MCF 10A (cell line): ENCODE measurements at regions of chr5 and their contacts with region 1.

Region 1: DNA sequence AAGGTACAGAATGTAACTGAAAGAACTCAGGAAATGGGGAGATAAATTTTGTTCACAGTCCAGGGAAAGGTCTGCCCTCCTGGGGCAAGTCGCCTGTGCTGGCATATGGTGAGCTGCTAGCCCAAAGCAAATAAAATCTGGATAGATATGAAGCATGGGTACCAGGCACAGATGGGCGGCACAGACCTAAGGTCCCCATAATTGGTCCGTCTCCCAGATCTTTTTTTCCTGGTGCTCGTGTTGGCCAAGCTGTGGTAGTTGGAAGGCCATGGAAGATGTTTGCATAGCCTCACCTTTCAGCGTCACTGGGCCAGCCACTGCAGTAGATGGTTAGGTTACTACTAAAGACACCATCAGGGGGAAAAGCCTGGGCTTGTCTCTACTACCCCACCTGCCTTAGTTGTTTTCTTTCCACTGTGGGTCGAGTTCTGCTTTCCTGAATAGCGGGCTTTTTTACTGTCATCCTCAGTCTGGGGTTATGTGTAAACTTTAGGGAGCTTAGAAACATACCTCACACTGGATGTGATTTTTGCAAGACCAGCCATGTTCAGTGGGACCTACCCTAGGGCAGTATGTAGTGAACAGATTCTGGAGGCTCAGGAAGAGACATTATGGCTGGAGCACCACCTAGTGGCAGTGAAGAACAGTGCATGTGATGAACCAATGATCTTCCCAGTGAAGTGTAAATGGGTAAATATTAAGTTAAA is 24.2 kb upstream of the GLRX start:
- DNase-seq: peak; percentile 84
- H3K4me3 Mint-ChIP-seq: no peak overlapping the region
- H3K27ac Mint-ChIP-seq: no peak overlapping the region
- H3K4me1 Mint-ChIP-seq: peaks cover 32% of the 10 kb centered on the region
- H3K27me3 Mint-ChIP-seq: no peaks in the 10 kb centered on the region
- CTCF ChIP-seq: peak; percentile 91

Region 2: GRCh38 chr5:95352691-95353090 is 494.0 kb before region 1 on chr5:
- CTCF ChIA-PET with region 1: no interaction called
- POLR2A ChIA-PET with region 1: no interaction called
- intact Hi-C with region 1: no loop called
- DNase-seq: no peak
- H3K4me3 Mint-ChIP-seq: no peak overlapping the region
- H3K27ac Mint-ChIP-seq: no peak overlapping the region
- H3K4me1 Mint-ChIP-seq: no peaks in the 10 kb centered on the region
- H3K27me3 Mint-ChIP-seq: no peaks in the 10 kb centered on the region
- CTCF ChIP-seq: no peak

Region 3: GRCh38 chr5:95646554-95647431 is 199.9 kb before region 1 on chr5 and contains the start of gene RFESD:
- CTCF ChIA-PET with region 1: interaction called, 149 read pairs
- POLR2A ChIA-PET with region 1: interaction called, 10 read pairs
- intact Hi-C with region 1: loop called (anchors 1 kb)
- DNase-seq: peak; percentile 96
- H3K4me3 Mint-ChIP-seq: peak within 1 kb of the TSS; percentile 74
- H3K27ac Mint-ChIP-seq: peak within 1 kb of the TSS; percentile 89
- H3K4me1 Mint-ChIP-seq: peaks cover 15% of the 10 kb centered on the region
- H3K27me3 Mint-ChIP-seq: no peaks in the 10 kb centered on the region
- CTCF ChIP-seq: no peak
- total RNA-seq, gene RFESD: 4.2 and 5.9 TPM in 2 replicates

Region 4: GRCh38 chr5:95669540-95669939 is 177.2 kb before region 1 on chr5:
- CTCF ChIA-PET with region 1: interaction called, 86 read pairs
- POLR2A ChIA-PET with region 1: interaction called, 4 read pairs
- intact Hi-C with region 1: loop called (anchors 1 kb)
- DNase-seq: peak; percentile 51
- H3K4me3 Mint-ChIP-seq: no peak overlapping the region
- H3K27ac Mint-ChIP-seq: no peak overlapping the region
- H3K4me1 Mint-ChIP-seq: no peaks in the 10 kb centered on the region
- H3K27me3 Mint-ChIP-seq: no peaks in the 10 kb centered on the region
- CTCF ChIP-seq: no peak

Region 5: GRCh38 chr5:95781101-95781583 is 65.6 kb before region 1 on chr5:
- CTCF ChIA-PET with region 1: interaction called, 336 read pairs
- POLR2A ChIA-PET with region 1: interaction called, 16 read pairs
- intact Hi-C with region 1: loop called (anchors 1 kb)
- DNase-seq: peak; percentile 85
- H3K4me3 Mint-ChIP-seq: no peak overlapping the region
- H3K27ac Mint-ChIP-seq: peak overlapping the region; percentile 64
- H3K4me1 Mint-ChIP-seq: no peaks in the 10 kb centered on the region
- H3K27me3 Mint-ChIP-seq: no peaks in the 10 kb centered on the region
- CTCF ChIP-seq: peak; percentile 89

Region 6: DNA sequence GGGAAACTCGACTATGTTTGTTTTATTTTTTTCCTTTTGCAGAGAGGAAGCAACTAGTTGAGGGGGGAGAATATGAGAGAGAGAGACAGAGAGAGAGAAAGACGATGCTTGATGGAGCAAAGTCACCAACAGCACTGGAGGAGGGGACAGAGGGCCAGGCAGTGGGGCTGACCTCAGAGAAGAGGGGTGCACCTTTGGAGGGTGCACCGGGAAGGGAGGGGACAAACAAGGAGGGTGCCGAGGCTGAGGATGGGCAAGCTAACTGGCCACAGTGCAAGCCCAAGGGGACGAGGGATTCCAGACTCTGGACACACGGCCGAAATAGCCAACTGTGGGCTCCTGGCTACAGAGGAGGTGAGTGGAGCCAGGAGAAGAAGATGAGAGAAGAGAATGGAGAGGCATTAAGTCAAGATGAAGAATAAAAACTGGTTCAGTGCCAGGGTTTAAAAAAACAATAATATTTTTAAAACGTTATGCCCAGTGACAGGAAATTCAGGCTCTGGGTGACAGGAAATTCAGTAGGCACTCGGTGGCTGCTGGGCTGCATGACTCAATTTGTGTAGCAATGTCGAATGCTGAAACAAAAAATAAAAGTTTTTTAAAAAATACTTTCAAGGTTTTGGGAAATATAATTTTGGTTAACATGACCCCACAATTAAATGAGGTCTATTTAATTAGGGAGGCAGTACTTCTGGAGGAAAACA is 10.9 kb before region 1 on chr5:
- CTCF ChIA-PET with region 1: interaction called, 11 read pairs
- POLR2A ChIA-PET with region 1: interaction called, 3 read pairs
- intact Hi-C with region 1: no loop called
- DNase-seq: no peak
- H3K4me3 Mint-ChIP-seq: no peak overlapping the region
- H3K27ac Mint-ChIP-seq: no peak overlapping the region
- H3K4me1 Mint-ChIP-seq: peaks cover 15% of the 10 kb centered on the region
- H3K27me3 Mint-ChIP-seq: no peaks in the 10 kb centered on the region
- CTCF ChIP-seq: no peak

Region 7: GRCh38 chr5:95883613-95884325 is 37.1 kb after region 1 on chr5:
- CTCF ChIA-PET with region 1: no interaction called
- POLR2A ChIA-PET with region 1: no interaction called
- intact Hi-C with region 1: no loop called
- DNase-seq: peak; percentile 59
- H3K4me3 Mint-ChIP-seq: no peak overlapping the region
- H3K27ac Mint-ChIP-seq: peak overlapping the region; percentile 54
- H3K4me1 Mint-ChIP-seq: peaks cover 23% of the 10 kb centered on the region
- H3K27me3 Mint-ChIP-seq: no peaks in the 10 kb centered on the region
- CTCF ChIP-seq: no peak

Region 8: DNA sequence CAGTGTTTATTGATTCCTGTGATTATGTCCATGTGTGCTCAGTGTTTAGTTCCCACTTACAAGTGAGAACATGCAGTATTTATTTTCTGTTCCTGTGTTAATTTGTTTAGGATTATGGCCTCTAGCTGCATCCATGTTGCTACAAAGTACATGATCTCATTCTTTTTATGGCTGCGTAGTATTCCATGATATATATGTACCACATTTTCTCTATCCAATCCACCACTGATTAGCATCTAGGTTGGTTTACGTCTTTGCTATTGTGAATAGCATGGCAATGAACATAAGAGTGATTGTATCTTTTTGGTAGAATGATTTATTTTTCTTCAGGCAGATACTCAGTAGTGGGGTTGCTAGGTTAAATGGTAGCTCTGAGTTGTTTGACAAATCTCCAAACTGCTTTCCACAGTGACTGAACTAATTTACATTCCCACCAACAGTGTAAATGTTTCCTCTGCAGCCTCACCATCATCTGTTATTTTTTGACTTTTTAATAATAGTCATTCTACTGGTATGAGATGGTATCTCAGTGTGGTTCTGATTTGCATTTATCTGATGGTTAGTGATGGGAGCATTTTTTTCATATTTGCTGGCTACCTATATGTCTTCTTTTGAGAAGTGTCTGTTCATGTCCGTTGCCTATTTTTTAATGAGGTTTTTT is 162.4 kb after region 1 on chr5:
- CTCF ChIA-PET with region 1: no interaction called
- POLR2A ChIA-PET with region 1: no interaction called
- intact Hi-C with region 1: no loop called
- DNase-seq: no peak
- H3K4me3 Mint-ChIP-seq: no peak overlapping the region
- H3K27ac Mint-ChIP-seq: no peak overlapping the region
- H3K4me1 Mint-ChIP-seq: peaks cover 7% of the 10 kb centered on the region
- H3K27me3 Mint-ChIP-seq: no peaks in the 10 kb centered on the region
- CTCF ChIP-seq: no peak